H1 (cell line): ENCODE measurements at regions of chr12 and their contacts with region 1.

Region 1: GRCh38 chr12:102948941-102949352 is 8.5 kb upstream of the ASCL1 start:
- DNase-seq: peak in 1 of 2 experiments; percentile 94
- H3K4me3 ChIP-seq: no peak overlapping the region
- H3K27ac ChIP-seq: no peak overlapping the region
- H3K4me1 ChIP-seq: peaks cover 5 to 14% (median 6%) of the 10 kb centered on the region in 4 experiments
- H3K27me3 ChIP-seq: peaks cover 42 to 54% (median 49%) of the 10 kb centered on the region in 4 experiments
- CTCF ChIP-seq: peak; percentile 83 to 91 (median 84)
- EP300 ChIP-seq: no peak
- POLR2A ChIP-seq: no peak
- RAD21 ChIP-seq: peak; percentile 95

Region 2: GRCh38 chr12:102479099-102479887 is 469.7 kb before region 1 on chr12:
- CTCF ChIA-PET with region 1: no interaction called
- POLR2A ChIA-PET with region 1: no interaction called
- DNase-seq: no peak
- H3K4me3 ChIP-seq: no peak overlapping the region
- H3K27ac ChIP-seq: no peak overlapping the region
- H3K4me1 ChIP-seq: peaks cover 6 to 12% (median 8%) of the 10 kb centered on the region in 4 experiments; a peak in 5 of 7 replicates
- H3K27me3 ChIP-seq: no peaks in the 10 kb centered on the region
- CTCF ChIP-seq: no peak
- EP300 ChIP-seq: no peak
- POLR2A ChIP-seq: no peak
- RAD21 ChIP-seq: no peak

Region 3: GRCh38 chr12:102885043-102885932 is 63.7 kb before region 1 on chr12:
- CTCF ChIA-PET with region 1: interaction called, 20 read pairs
- POLR2A ChIA-PET with region 1: no interaction called
- DNase-seq: no peak
- H3K4me3 ChIP-seq: no peak overlapping the region
- H3K27ac ChIP-seq: no peak overlapping the region
- H3K4me1 ChIP-seq: peaks cover 0 to 6% (median 5%) of the 10 kb centered on the region in 4 experiments; a peak in 4 of 7 replicates
- H3K27me3 ChIP-seq: no peaks in the 10 kb centered on the region; a peak in 1 of 7 replicates
- CTCF ChIP-seq: no peak
- EP300 ChIP-seq: no peak
- POLR2A ChIP-seq: no peak
- RAD21 ChIP-seq: no peak

Region 4: DNA sequence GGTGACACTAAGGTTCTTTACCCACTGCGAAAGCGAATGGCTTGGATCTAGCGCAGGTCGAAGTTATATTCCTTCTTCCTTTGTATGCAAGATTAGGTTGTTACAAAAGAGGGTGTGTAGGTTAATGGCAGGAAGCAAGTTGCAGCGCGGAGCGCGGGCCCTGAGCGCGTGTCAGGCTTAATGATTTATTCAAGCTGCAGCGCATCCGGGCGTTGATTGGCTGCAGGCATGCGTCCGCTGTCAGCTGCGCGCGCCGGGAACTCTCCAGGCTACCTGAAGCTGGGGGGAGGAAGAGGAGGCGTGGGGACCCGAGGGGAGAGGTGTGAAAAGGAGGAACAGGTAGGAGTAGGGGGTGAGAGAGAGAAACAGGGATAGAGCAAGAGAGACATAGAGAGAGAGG is 15.9 kb after region 1 on chr12:
- CTCF ChIA-PET with region 1: interaction called, 37 read pairs
- POLR2A ChIA-PET with region 1: interaction called, 4 read pairs
- DNase-seq: peak in 1 of 2 experiments; percentile 69
- H3K4me3 ChIP-seq: peak overlapping the region; percentile 19 to 58 (median 35); a peak in 5 of 8 replicates
- H3K27ac ChIP-seq: no peak overlapping the region
- H3K4me1 ChIP-seq: peaks cover 0 to 15% (median 7%) of the 10 kb centered on the region in 4 experiments; a peak in 4 of 7 replicates
- H3K27me3 ChIP-seq: peaks cover 62 to 87% (median 82%) of the 10 kb centered on the region in 4 experiments
- CTCF ChIP-seq: no peak
- EP300 ChIP-seq: no peak
- POLR2A ChIP-seq: no peak
- RAD21 ChIP-seq: no peak

Region 5: DNA sequence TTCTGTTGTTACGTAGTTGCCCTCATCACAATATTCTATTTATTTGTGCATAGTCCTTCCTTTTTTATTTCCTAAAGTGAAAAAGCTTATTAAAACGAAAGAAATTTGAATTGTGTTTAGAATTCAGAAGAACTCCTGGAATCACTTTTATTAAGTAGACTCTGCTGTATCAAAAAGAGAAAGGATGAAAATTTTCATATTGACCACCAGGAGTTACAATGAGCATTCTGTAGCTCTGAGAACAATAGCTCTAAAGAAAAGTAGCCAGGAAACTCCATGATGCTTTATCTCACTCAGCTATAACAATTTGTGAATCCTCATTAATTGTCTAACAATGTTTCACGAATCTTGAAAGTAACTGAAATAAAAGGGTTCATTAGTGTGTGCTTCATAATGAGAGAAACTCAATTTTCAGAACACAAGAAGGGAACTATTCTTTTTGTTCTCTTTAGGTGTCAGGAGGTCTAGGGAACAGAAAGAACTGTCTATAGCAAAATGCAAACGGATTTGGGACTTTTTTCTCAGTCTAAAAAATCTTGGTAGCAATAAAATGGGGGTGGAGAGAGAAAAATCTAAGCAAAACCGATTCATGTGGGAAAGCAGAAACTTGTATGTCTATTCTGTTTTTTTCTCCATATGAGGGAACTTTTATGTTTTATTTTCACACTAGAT is 27.8 kb after region 1 on chr12:
- CTCF ChIA-PET with region 1: interaction called, 21 read pairs
- POLR2A ChIA-PET with region 1: no interaction called
- DNase-seq: no peak
- H3K4me3 ChIP-seq: no peak overlapping the region
- H3K27ac ChIP-seq: no peak overlapping the region
- H3K4me1 ChIP-seq: no peaks in the 10 kb centered on the region
- H3K27me3 ChIP-seq: peaks cover 0 to 2% (median 0%) of the 10 kb centered on the region in 4 experiments; a peak in 2 of 7 replicates
- CTCF ChIP-seq: peak in 1 of 3 experiments; percentile 23; a peak in 2 of 4 replicates
- EP300 ChIP-seq: no peak
- POLR2A ChIP-seq: no peak
- RAD21 ChIP-seq: no peak

Region 6: DNA sequence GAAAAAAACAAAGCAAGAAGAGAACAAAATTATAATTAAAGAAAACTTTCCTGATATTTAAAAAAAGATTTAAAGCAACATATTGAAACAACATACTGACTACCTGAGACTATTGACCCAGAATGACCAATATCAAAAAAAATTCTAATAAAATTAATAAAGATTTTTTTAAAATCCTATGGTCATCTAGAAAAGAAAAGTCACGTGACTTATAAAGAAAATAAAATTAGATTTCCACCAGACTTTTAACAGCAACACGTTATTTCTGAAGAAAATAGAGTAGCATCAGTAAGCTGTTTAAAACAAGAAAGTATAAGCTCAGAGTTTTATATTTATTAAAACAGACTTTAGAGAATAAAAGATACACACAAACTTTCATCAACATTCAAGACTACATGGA is 308.8 kb after region 1 on chr12:
- CTCF ChIA-PET with region 1: no interaction called
- POLR2A ChIA-PET with region 1: no interaction called
- DNase-seq: no peak
- H3K4me3 ChIP-seq: no peak overlapping the region
- H3K27ac ChIP-seq: no peak overlapping the region
- H3K4me1 ChIP-seq: no peaks in the 10 kb centered on the region
- H3K27me3 ChIP-seq: no peaks in the 10 kb centered on the region
- CTCF ChIP-seq: no peak
- EP300 ChIP-seq: no peak
- POLR2A ChIP-seq: no peak
- RAD21 ChIP-seq: no peak